Ovary (tissue), 10 donors: ENCODE measurements at regions of chr9 and their contacts with region 1.

Region 1: GRCh38 chr9:136129176-136129575 is 10.5 kb upstream of the TMEM250 start:
- DNase-seq: no peak
- H3K4me3 ChIP-seq: no peak overlapping the region
- H3K27ac ChIP-seq: no peak overlapping the region
- H3K4me1 ChIP-seq: no peaks in the 10 kb centered on the region
- H3K27me3 ChIP-seq: no peaks in the 10 kb centered on the region
- CTCF ChIP-seq: no peak
- EP300 ChIP-seq: no peak
- POLR2A ChIP-seq: no peak

Region 2: GRCh38 chr9:136275655-136276429 is 146.7 kb after region 1 on chr9:
- intact Hi-C with region 1: loop called in 1 of 4 experiments (anchors 5 kb)
- DNase-seq: no peak
- H3K4me3 ChIP-seq: no peak overlapping the region
- H3K27ac ChIP-seq: no peak overlapping the region
- H3K4me1 ChIP-seq: no peaks in the 10 kb centered on the region
- H3K27me3 ChIP-seq: no peaks in the 10 kb centered on the region
- CTCF ChIP-seq: no peak
- EP300 ChIP-seq: no peak
- POLR2A ChIP-seq: no peak